CD8-positive, alpha-beta T cell (primary cell): ENCODE measurements at regions of chr2 and their contacts with region 1.

Region 1: GRCh38 chr2:135052042-135052876 is at the start of gene RAB3GAP1:
- DNase-seq: peak; percentile 80 to 97 (median 91)
- ATAC-seq: peak; percentile 80
- H3K4me3 ChIP-seq: peak within 1 kb of the TSS; percentile 79 to 80
- H3K4me3 Mint-ChIP-seq: peak within 1 kb of the TSS; percentile 92
- H3K27ac ChIP-seq: peak within 1 kb of the TSS; percentile 96
- H3K27ac Mint-ChIP-seq: peak within 1 kb of the TSS; percentile 99
- H3K4me1 ChIP-seq: peaks cover 11% of the 10 kb centered on the region
- H3K4me1 Mint-ChIP-seq: peaks cover 42% of the 10 kb centered on the region
- H3K27me3 ChIP-seq: peaks cover 0 to 3% of the 10 kb centered on the region in 2 experiments
- H3K27me3 Mint-ChIP-seq: no peaks in the 10 kb centered on the region
- CTCF ChIP-seq: no peak
- total RNA-seq, gene RAB3GAP1: 31.0 to 32.8 TPM

Region 2: DNA sequence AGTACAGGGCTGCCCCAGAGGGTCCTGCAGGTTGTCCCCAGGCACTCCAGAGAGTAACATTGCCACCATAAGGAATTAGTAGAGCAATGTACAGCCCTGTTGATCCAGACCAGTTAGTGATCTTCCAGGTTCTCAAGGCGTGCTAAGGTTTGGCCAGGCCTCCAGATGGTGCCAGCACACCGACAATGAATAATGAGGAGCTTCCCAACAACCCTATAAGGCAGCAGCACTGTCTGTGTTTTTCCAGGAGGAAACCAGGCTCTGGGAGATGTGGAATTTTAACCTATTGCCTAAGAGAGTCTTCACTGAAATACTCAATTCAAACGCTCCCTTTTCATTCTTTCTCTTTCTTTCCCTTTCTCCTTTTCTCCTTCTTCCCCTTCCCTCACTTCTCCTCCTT is 676.3 kb before region 1 on chr2:
- CTCF ChIA-PET with region 1: no interaction called
- POLR2A ChIA-PET with region 1: no interaction called
- intact Hi-C with region 1: no loop called
- DNase-seq: no peak
- ATAC-seq: no peak
- H3K4me3 ChIP-seq: no peak overlapping the region
- H3K4me3 Mint-ChIP-seq: no peak overlapping the region
- H3K27ac ChIP-seq: no peak overlapping the region
- H3K27ac Mint-ChIP-seq: no peak overlapping the region
- H3K4me1 ChIP-seq: no peaks in the 10 kb centered on the region
- H3K4me1 Mint-ChIP-seq: no peaks in the 10 kb centered on the region
- H3K27me3 ChIP-seq: no peaks in the 10 kb centered on the region
- H3K27me3 Mint-ChIP-seq: no peaks in the 10 kb centered on the region
- CTCF ChIP-seq: no peak

Region 3: GRCh38 chr2:134668821-134669220 is 383.4 kb before region 1 on chr2:
- CTCF ChIA-PET with region 1: no interaction called
- POLR2A ChIA-PET with region 1: no interaction called
- intact Hi-C with region 1: loop called (anchors 2 to 5 kb)
- DNase-seq: peak; percentile 50 to 95 (median 78)
- ATAC-seq: peak; percentile 73
- H3K4me3 ChIP-seq: peak overlapping the region; percentile 0 to 10
- H3K4me3 Mint-ChIP-seq: peak overlapping the region; percentile 42
- H3K27ac ChIP-seq: peak overlapping the region in 1 of 2 experiments; percentile 83
- H3K27ac Mint-ChIP-seq: peak overlapping the region; percentile 82
- H3K4me1 ChIP-seq: peaks cover 60% of the 10 kb centered on the region
- H3K4me1 Mint-ChIP-seq: peaks cover 82% of the 10 kb centered on the region
- H3K27me3 ChIP-seq: no peaks in the 10 kb centered on the region
- H3K27me3 Mint-ChIP-seq: peaks cover 20% of the 10 kb centered on the region
- CTCF ChIP-seq: no peak

Region 4: GRCh38 chr2:135531231-135532228 is 479.3 kb after region 1 on chr2 and contains the start of gene R3HDM1:
- CTCF ChIA-PET with region 1: no interaction called
- POLR2A ChIA-PET with region 1: interaction called, 3 read pairs
- intact Hi-C with region 1: loop called (anchors 1 kb)
- DNase-seq: peak; percentile 88 to 99 (median 94)
- ATAC-seq: peak; percentile 75
- H3K4me3 ChIP-seq: peak within 1 kb of the TSS; percentile 74 to 84
- H3K4me3 Mint-ChIP-seq: no peak within 1 kb of the TSS
- H3K27ac ChIP-seq: peak within 1 kb of the TSS; percentile 79 to 91
- H3K27ac Mint-ChIP-seq: no peak within 1 kb of the TSS
- H3K4me1 ChIP-seq: peaks cover 15% of the 10 kb centered on the region
- H3K4me1 Mint-ChIP-seq: peaks cover 29% of the 10 kb centered on the region
- H3K27me3 ChIP-seq: no peaks in the 10 kb centered on the region
- H3K27me3 Mint-ChIP-seq: no peaks in the 10 kb centered on the region
- CTCF ChIP-seq: no peak
- total RNA-seq, gene R3HDM1: 35.3 to 48.2 TPM

Region 5: DNA sequence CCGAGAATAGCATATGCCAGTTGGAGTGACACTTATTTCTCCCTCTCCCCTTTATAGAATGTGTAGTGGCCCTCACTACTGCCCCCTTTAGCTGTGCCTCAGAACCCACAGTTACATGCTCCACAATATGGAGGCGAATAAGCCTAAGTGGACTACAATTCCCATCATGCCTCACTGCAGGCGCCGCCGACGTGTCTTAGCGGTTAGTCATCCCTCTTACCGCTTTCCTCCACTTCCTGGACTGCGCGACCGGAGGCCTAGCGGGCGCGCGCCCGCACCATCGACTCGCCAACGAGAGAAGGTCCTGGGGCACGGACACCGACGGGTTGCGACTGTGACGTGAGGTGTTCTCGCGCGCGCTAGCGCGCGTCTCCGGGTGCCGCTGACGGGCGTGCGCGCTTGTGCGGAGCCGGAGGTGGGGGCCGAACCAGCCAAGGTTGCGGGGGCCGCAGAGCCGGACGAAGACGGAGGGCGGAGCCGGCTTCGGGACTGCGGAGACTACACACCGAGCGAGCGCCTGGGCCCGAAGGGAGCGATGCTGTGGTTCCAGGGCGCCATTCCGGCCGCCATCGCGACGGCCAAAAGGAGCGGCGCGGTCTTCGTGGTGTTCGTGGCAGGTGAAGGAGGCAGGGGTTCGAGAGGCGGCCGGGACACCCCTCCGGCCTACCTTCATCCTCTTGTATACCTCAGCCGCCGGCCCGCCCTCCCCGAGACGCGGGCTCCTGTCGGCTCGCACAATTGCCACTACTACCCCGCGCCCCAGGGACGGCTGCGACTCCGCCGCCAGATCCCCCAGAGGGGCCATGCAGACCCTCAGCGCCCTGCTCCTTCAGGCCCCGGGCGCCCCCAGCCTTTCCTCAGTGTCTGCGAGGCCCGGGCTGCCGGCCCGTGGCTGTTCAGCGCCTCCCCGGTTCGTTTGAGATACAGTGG is 689.4 kb after region 1 on chr2 and contains the start of gene UBXN4:
- CTCF ChIA-PET with region 1: no interaction called
- POLR2A ChIA-PET with region 1: interaction called, 4 read pairs
- intact Hi-C with region 1: loop called (anchors 1 to 2 kb)
- DNase-seq: peak; percentile 89 to 99 (median 94)
- ATAC-seq: peak; percentile 87
- H3K4me3 ChIP-seq: peak within 1 kb of the TSS; percentile 69 to 96
- H3K4me3 Mint-ChIP-seq: peak within 1 kb of the TSS; percentile 98
- H3K27ac ChIP-seq: peak within 1 kb of the TSS; percentile 89 to 98
- H3K27ac Mint-ChIP-seq: peak within 1 kb of the TSS; percentile 98
- H3K4me1 ChIP-seq: peaks cover 28% of the 10 kb centered on the region
- H3K4me1 Mint-ChIP-seq: peaks cover 43% of the 10 kb centered on the region
- H3K27me3 ChIP-seq: no peaks in the 10 kb centered on the region
- H3K27me3 Mint-ChIP-seq: no peaks in the 10 kb centered on the region
- CTCF ChIP-seq: no peak
- total RNA-seq, gene UBXN4: 157 to 172 TPM

Region 6: DNA sequence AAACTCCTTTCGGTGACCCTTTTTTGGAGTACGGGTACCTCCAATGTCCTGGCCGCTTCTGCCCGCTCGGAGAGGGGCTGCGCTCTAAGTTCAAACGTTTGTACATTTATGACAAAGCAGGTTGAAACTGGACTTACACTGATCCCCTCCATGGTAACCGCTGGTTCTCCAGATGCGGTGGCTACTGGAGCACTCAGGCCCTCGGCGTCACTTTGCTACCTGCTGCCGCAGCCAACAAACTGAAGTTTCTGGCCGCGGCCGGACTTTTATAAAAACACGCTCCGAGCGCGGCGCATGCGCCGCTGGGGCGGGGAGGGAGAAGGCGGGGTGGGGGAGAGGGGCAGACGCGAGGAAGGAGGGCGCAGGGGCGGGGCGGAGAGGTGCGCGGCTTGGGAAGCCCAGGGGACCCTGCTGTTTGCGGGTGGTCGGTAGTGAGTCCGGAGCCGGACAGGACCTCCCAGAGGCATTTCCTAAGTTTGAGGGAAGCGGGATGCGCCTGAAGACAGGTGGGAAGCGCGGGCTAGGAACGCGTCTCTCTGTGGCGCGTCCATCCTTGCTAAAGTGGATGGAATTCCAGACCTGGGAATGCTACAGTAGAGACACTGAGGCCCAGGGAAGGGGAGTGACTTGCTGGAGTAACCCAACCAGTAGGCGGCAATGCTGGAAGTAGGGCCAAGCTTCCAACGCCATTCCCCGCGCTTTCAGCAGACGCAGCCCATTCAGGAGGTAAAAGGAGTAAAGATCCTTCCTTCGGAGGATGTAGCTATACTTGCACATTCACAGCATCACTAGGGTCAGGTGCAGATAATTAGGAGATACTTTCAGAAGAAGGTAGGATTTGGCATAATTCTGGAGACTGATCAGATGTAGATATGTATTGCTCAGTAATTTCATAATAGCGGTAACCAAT is 1065.9 kb after region 1 on chr2 and contains the start of gene CXCR4:
- CTCF ChIA-PET with region 1: no interaction called
- POLR2A ChIA-PET with region 1: no interaction called
- intact Hi-C with region 1: loop called in 1 of 2 experiments (anchors 5 kb)
- DNase-seq: peak; percentile 92 to 99 (median 94)
- ATAC-seq: peak; percentile 35
- H3K4me3 ChIP-seq: peak within 1 kb of the TSS; percentile 77 to 83
- H3K4me3 Mint-ChIP-seq: peak within 1 kb of the TSS; percentile 97
- H3K27ac ChIP-seq: peak within 1 kb of the TSS; percentile 87 to 100
- H3K27ac Mint-ChIP-seq: peak within 1 kb of the TSS; percentile 100
- H3K4me1 ChIP-seq: peaks cover 60% of the 10 kb centered on the region
- H3K4me1 Mint-ChIP-seq: peaks cover 64% of the 10 kb centered on the region
- H3K27me3 ChIP-seq: no peaks in the 10 kb centered on the region
- H3K27me3 Mint-ChIP-seq: no peaks in the 10 kb centered on the region
- CTCF ChIP-seq: no peak
- total RNA-seq, gene CXCR4: 2,159 to 2,188 TPM